Endothelial cell of umbilical vein (primary cell): ENCODE measurements at regions of chr9 and their contacts with region 1.

Region 1: DNA sequence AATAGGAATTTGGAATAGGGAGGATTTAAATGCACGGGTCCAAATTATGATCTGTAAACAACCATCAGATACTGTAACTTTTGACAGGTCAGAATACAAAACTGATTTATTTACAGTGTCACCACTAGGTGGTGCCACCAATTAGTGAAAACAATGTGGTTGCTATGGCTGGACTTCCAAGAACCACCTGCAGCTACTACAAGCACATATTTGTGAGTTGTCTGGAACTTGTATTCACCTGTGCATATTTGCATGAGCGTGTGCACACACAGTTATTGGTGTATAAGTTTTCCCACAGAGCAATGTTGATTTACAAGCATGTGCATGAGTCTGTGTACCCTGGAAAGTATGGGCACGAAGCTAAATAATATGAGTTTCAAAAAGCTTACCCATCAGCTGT is 3.0 kb upstream of the HRCT1 start:
- DNase-seq: peak; percentile 67
- H3K4me3 ChIP-seq: no peak overlapping the region
- H3K27ac ChIP-seq: no peak overlapping the region
- H3K4me1 ChIP-seq: peaks cover 35% of the 10 kb centered on the region
- H3K27me3 ChIP-seq: no peaks in the 10 kb centered on the region
- CTCF ChIP-seq: peak; percentile 48 to 62
- POLR2A ChIP-seq: no peak

Region 2: DNA sequence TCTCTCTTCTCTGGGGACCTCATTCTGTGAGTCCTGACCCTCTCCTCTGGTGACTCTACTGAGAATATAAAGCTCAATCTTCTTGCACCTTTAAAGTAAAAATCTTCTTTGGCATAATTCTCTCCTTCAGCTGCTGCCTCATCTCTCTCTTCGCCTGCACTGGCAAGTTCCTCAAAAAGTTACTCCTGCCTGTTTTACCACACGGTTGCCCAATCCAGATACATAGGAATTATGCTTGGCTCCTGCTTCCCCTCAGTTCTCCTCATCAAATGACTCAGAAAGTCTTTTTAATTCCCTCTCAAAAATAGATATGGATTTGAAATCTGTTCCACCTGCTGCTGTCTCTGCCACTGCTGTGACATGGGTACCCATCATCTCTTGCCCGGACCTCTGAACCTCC is 11.4 kb before region 1 on chr9:
- CTCF ChIA-PET with region 1: interaction called, 8 read pairs
- POLR2A ChIA-PET with region 1: no interaction called
- dilution Hi-C with region 1: no loop called
- intact Hi-C with region 1: loop called (anchors 2 kb)
- DNase-seq: no peak
- H3K4me3 ChIP-seq: no peak overlapping the region
- H3K27ac ChIP-seq: no peak overlapping the region
- H3K4me1 ChIP-seq: no peaks in the 10 kb centered on the region
- H3K27me3 ChIP-seq: peaks cover 2 to 7% of the 10 kb centered on the region in 2 experiments
- CTCF ChIP-seq: no peak
- POLR2A ChIP-seq: no peak

Region 3: DNA sequence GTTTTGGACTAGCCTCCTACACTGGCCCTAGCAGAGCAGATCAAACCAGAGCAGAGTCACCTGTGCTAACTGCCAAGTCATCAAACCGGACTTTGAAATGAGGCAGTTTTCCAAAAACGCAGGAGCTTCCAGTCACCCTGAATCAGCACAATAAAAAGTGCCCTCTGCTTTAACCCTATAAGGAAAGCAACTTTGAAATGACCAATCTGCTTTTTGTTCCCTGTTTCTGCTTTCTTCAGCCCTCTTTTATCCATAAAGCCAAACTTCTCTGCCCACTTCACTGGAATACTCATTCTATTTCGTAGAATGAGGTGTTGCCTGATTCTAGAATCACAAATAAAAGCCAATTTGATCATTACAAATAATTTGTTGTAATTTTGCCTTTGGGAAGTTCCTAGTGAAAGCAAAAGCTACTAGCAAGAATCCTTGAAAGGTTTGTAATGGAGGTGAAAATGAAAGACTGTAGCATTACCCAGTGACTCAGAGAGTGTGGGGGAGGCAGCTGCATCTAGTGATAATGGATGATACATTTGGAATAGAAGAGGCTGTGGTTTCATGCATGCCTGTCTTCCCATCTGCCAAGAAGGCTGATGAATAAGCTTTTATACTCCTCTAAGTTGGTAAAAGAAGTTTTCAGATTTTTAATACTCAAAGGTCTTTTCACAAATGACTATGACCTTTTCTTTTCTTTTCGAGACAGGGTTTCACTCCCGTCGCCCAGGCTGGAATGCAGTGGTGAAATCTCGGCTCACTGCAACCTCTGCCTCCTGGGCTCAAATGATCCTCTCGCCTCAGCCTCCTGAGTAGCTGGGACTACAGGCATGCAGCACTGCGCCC is 21.1 kb after region 1 on chr9:
- CTCF ChIA-PET with region 1: interaction called, 11 read pairs
- POLR2A ChIA-PET with region 1: no interaction called
- dilution Hi-C with region 1: no loop called
- intact Hi-C with region 1: no loop called
- DNase-seq: no peak
- H3K4me3 ChIP-seq: no peak overlapping the region
- H3K27ac ChIP-seq: no peak overlapping the region
- H3K4me1 ChIP-seq: peaks cover 12% of the 10 kb centered on the region
- H3K27me3 ChIP-seq: no peaks in the 10 kb centered on the region
- CTCF ChIP-seq: no peak
- POLR2A ChIP-seq: no peak

Region 4: GRCh38 chr9:35945341-35946018 is 42.4 kb after region 1 on chr9:
- CTCF ChIA-PET with region 1: interaction called, 103 read pairs
- POLR2A ChIA-PET with region 1: interaction called, 6 read pairs
- dilution Hi-C with region 1: no loop called
- intact Hi-C with region 1: loop called (anchors 1 kb)
- DNase-seq: peak; percentile 67
- H3K4me3 ChIP-seq: peak overlapping the region in 1 of 3 experiments; percentile 33
- H3K27ac ChIP-seq: peak overlapping the region; percentile 16
- H3K4me1 ChIP-seq: peaks cover 22% of the 10 kb centered on the region
- H3K27me3 ChIP-seq: no peaks in the 10 kb centered on the region
- CTCF ChIP-seq: peak; percentile 83 to 85
- POLR2A ChIP-seq: no peak

Region 5: DNA sequence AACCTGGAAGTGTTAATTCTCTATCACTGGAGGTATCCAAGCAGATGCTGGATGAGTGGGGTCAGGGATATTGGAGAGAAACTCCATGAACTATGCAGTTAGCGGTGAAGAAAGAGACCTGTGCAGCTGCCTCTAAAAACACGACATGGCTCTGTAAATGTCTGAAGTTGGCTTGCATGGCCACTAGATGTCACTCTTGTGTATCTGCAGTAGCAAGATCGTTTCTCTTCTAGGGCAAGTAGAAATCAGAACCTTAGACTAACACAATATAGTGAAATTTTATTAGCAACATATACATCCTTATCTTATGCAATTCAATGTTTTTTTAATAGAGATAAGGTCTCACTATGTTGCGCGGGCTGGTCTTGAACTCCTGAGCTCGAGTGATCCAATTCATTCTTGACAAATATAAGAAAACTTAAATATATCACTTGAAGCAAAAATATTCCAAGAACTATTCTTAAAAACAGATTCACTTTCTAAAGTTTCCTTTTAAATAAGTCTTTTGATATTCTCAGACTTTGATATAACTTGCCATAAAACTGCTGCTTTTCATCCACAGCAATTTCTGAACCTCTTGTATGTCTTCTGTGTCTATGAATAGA is 52.0 kb after region 1 on chr9:
- CTCF ChIA-PET with region 1: interaction called, 11 read pairs
- POLR2A ChIA-PET with region 1: interaction called, 6 read pairs
- dilution Hi-C with region 1: no loop called
- intact Hi-C with region 1: no loop called
- DNase-seq: peak; percentile 79
- H3K4me3 ChIP-seq: no peak overlapping the region
- H3K27ac ChIP-seq: no peak overlapping the region
- H3K4me1 ChIP-seq: peaks cover 19% of the 10 kb centered on the region
- H3K27me3 ChIP-seq: no peaks in the 10 kb centered on the region
- CTCF ChIP-seq: peak; percentile 71 to 75
- POLR2A ChIP-seq: no peak

Region 6: DNA sequence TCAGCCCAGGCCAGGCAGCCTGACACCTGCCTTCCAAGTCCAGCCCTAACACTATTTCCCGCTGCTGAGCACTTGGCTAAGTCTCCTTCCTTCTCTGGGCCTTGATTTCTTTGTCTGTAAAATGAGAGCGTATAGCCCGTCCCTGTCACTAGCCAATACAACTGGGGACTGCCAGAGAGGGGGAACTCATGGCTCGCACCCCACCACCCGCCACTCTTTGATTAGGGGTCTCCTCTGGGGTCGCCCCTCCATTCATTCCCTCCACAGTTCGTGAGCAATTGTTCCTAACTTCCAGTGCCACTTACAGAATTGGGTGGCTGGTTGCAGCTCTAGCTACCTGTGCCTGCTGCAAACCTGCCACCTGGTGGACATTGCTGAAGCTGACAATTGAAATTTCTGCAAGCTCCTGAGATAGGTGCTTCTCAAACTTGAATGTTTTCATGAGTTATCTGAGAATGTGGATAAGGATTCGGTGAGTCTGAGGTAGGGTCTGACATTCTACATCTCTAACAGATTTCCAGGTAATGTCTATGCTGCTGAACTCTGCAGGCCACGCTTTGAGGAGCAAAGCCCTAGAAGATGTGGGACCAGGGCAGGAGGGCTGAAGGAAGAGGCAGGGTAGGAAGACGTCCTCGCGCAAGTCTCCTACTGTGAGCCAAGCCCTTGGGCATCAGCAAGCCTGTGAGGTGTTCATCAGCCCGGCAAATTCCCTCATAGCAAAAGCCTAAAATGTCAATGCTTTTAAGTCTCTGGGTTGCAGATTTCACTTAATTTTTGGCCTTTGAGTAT is 120.4 kb after region 1 on chr9:
- CTCF ChIA-PET with region 1: interaction called, 46 read pairs
- POLR2A ChIA-PET with region 1: no interaction called
- dilution Hi-C with region 1: no loop called
- intact Hi-C with region 1: loop called (anchors 1 kb)
- DNase-seq: peak; percentile 71
- H3K4me3 ChIP-seq: no peak overlapping the region
- H3K27ac ChIP-seq: no peak overlapping the region
- H3K4me1 ChIP-seq: no peaks in the 10 kb centered on the region
- H3K27me3 ChIP-seq: no peaks in the 10 kb centered on the region
- CTCF ChIP-seq: peak; percentile 71 to 79
- POLR2A ChIP-seq: no peak